A673 (cell line): ENCODE measurements at regions of chr12 and their contacts with region 1.

Region 1: DNA sequence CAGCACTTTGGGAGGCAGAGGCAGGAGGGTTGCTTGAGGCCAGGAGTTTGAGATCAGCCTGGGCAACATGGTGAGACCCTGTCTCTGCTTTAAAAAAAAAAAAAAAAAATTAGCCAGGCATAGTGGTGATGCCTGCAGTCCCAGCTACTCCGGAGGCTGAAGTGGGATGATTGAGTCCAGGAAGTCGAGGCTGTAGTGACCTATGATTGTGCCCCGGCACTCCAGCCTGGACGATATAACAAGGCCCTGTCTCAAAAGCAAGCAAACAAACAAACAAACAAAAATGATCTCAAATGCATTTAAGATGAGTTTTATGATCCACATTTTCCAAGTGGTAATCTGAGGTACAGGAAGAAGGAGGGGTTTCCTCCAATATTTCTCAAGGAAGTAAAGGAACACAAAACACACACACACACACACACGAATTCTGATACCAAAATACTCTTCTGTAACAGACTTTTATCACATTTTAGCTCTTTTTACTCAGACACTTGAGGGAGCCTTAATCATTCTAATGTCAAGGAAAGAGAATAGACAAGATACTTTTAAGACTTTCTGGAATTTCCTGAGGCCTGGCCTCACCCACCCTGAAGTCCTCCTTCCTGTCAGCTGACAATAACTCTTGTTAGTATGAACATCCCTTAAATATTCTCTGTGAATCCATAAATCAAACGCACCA is 44.4 kb upstream of the CERS5 start:
- DNase-seq: peak; percentile 87
- H3K4me3 ChIP-seq: peak overlapping the region; percentile 25
- H3K27ac ChIP-seq: peak overlapping the region; percentile 82
- H3K4me1 ChIP-seq: peaks cover 37% of the 10 kb centered on the region
- H3K27me3 ChIP-seq: no peaks in the 10 kb centered on the region
- CTCF ChIP-seq: peak; percentile 47; the same call in 1 of the 2 replicates

Region 2: DNA sequence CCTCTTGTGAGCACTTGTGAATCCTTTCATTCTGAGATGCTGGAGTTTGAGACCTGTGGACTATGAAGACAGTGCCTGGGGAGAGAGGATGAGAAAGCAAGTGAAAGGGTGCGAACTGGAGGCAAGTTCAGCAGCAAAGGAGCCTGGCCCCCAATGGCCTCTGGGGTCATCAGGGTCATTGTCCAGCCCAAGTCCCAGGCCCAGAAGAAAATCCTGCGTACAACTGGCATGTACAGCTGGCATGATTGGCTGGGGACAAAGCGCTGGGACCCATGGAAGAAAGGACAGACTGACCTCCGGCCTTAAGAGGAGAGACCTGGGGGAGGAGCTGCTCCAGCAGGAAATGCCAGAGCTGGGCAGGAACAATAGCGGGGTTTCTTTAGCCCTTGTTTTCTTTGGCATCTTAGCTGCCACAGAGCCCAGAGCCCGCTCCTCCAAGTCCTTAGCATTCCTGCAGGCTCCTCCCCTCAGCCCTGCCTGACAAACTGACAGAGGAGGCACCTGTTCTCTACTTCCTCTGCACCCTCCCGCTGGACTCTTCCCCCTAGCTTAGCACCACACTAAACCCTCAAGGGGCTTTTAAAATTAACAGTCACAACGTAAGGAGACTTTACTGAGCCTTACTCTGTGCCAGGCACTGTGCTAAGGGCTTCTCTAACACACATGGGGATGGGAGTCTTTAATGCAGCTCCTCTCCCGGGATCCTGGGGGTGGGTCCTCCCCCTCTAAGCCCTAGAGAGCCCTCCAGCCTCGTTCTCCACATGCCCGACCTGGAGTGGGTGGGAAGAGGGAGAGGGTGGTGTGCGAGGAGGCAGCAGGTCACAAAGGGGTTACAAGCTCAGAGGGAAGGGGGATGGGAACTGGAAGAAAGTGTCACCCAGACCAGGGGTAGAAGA is 251.7 kb before region 1 on chr12:
- CTCF ChIA-PET with region 1: no interaction called
- POLR2A ChIA-PET with region 1: no interaction called
- intact Hi-C with region 1: no loop called
- DNase-seq: no peak
- H3K4me3 ChIP-seq: no peak overlapping the region
- H3K27ac ChIP-seq: no peak overlapping the region
- H3K4me1 ChIP-seq: no peaks in the 10 kb centered on the region
- H3K27me3 ChIP-seq: peaks cover 51% of the 10 kb centered on the region
- CTCF ChIP-seq: no peak

Region 3: DNA sequence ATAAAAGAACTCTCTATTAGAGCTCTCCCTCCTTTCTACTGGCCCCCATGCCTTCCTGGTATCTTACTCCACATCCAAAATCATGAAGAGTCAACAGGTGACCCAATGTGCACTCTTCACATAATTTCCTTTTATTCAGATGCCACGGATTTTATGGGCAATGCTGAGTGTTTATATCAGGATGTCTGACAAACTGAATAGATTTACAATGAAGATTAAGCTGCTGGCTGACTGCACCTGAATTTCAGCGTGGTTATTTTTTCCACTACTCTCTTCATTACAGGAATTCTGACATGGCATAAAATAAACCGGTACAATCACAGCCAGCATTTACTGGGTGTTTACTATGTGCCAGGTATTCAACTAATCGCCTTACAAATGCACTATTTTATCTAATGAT is 15.0 kb before region 1 on chr12:
- CTCF ChIA-PET with region 1: interaction called, 5 read pairs
- POLR2A ChIA-PET with region 1: interaction called, 12 read pairs
- intact Hi-C with region 1: no loop called
- DNase-seq: no peak
- H3K4me3 ChIP-seq: no peak overlapping the region
- H3K27ac ChIP-seq: peak overlapping the region; percentile 52
- H3K4me1 ChIP-seq: peaks cover 19% of the 10 kb centered on the region
- H3K27me3 ChIP-seq: no peaks in the 10 kb centered on the region
- CTCF ChIP-seq: no peak

Region 4: DNA sequence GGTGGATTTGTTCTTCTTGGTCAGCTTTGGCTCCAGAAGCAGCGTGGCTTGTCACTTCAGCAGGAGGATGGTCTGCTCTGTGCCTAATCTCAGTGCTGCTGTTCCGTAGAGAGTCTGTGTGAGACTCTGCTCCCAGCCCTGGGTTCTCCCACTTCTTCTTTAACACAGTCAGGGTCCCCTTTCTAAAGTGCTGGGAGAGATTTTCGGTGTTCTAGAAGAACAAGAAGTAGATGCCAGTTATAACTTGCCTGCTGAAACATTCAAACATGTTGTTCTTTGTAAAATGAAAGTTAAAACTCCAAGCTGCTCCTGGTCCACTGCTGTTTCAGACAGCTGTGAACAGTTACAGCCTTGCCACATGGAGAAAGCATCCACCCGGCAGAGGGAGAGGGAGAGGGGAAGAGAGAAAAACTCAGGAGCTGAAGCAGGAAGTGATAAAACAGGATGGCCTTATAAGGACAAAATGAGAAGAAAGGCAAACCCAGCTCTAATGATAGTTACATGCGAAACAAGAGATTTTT is 10.8 kb after region 1 on chr12:
- CTCF ChIA-PET with region 1: interaction called, 4 read pairs
- POLR2A ChIA-PET with region 1: interaction called, 18 read pairs
- intact Hi-C with region 1: no loop called
- DNase-seq: peak; percentile 93
- H3K4me3 ChIP-seq: peak overlapping the region; percentile 58
- H3K27ac ChIP-seq: peak overlapping the region; percentile 91
- H3K4me1 ChIP-seq: peaks cover 21% of the 10 kb centered on the region
- H3K27me3 ChIP-seq: no peaks in the 10 kb centered on the region
- CTCF ChIP-seq: no peak